Activated CD4-positive, alpha-beta T cell treated with anti-CD3 and anti-CD28 coated beads, Interleukin-2, amount 10 ng/mL, durations not matched to agents 24 days and 14 days (primary cell): ENCODE measurements at regions of chr13 and their contacts with region 1.

Region 1: GRCh38 chr13:60431108-60431700 is 34.2 kb downstream of the TDRD3 start:
- DNase-seq: peak; percentile 70
- H3K4me3 Mint-ChIP-seq: no peak overlapping the region
- H3K27ac Mint-ChIP-seq: no peak overlapping the region
- H3K4me1 Mint-ChIP-seq: peaks cover 13% of the 10 kb centered on the region
- H3K27me3 Mint-ChIP-seq: no peaks in the 10 kb centered on the region

Region 2: DNA sequence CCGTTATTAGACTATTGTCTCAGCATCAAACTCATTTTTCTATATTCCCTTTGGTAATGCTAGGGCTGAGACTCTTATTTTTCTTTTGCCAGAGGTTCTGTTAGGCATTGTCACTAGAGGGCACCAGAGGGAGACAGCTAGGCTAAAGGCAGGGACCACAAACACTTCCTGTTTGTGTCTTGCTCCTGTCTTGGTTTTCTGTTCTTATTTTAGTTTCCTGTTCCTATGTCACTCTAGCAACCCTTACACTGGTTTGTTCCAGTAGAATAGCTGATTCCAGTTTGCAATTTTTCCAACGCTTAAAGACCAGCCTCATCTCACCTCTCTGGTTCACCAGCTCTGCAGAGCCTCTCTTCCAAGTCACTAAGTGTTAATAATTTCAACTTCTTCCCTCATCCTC is 1039.5 kb before region 1 on chr13:
- intact Hi-C with region 1: loop called (anchors 5 kb)
- DNase-seq: peak; percentile 91
- H3K4me3 Mint-ChIP-seq: no peak overlapping the region
- H3K27ac Mint-ChIP-seq: no peak overlapping the region
- H3K4me1 Mint-ChIP-seq: peaks cover 2% of the 10 kb centered on the region
- H3K27me3 Mint-ChIP-seq: peaks cover 20% of the 10 kb centered on the region

Region 3: DNA sequence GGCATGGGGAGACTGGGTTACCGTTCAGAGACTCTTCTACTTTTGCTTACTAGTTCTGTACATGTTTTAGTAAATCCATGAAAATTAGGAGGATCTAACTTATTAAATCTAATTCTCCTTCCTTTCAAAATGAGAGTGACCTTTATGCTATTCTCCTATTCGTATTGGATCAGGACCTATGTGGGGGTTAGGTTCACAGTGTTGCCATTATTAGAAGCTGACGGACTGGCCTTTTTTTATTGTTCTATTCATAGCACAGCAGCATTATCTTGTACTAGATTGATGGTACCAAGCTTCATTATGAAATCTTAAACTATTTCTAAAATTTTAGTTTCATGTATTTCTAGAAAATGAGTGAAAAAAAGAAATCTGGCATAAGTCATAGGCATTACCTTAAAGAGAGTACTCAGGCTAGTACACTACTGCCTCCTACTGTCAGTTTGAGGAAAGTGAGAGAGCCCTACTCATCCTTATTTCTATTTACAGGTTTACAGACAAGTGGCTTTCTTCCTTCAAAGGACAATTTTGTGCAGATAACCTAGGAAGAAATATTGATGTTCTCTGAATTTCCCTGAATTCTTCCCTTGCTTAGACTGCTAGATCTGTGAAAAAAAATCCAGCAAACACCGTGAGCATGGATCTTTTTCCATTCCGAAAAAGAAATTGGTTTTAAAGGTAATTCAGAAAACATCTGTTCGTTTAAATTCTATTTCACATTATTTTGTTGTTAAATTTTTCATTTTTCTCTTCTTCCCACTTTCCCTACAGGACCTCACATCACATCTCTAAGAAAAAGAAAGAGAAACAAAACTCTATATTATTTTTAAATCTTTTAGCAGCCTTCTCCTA is 753.0 kb before region 1 on chr13:
- intact Hi-C with region 1: loop called (anchors 2 kb)
- DNase-seq: peak; percentile 65
- H3K4me3 Mint-ChIP-seq: no peak overlapping the region
- H3K27ac Mint-ChIP-seq: no peak overlapping the region
- H3K4me1 Mint-ChIP-seq: no peaks in the 10 kb centered on the region
- H3K27me3 Mint-ChIP-seq: no peaks in the 10 kb centered on the region

Region 4: GRCh38 chr13:60134376-60134775 is 296.8 kb before region 1 on chr13:
- intact Hi-C with region 1: no loop called
- DNase-seq: peak; percentile 59
- H3K4me3 Mint-ChIP-seq: no peak overlapping the region
- H3K27ac Mint-ChIP-seq: no peak overlapping the region
- H3K4me1 Mint-ChIP-seq: peaks cover 13% of the 10 kb centered on the region
- H3K27me3 Mint-ChIP-seq: no peaks in the 10 kb centered on the region

Region 5: DNA sequence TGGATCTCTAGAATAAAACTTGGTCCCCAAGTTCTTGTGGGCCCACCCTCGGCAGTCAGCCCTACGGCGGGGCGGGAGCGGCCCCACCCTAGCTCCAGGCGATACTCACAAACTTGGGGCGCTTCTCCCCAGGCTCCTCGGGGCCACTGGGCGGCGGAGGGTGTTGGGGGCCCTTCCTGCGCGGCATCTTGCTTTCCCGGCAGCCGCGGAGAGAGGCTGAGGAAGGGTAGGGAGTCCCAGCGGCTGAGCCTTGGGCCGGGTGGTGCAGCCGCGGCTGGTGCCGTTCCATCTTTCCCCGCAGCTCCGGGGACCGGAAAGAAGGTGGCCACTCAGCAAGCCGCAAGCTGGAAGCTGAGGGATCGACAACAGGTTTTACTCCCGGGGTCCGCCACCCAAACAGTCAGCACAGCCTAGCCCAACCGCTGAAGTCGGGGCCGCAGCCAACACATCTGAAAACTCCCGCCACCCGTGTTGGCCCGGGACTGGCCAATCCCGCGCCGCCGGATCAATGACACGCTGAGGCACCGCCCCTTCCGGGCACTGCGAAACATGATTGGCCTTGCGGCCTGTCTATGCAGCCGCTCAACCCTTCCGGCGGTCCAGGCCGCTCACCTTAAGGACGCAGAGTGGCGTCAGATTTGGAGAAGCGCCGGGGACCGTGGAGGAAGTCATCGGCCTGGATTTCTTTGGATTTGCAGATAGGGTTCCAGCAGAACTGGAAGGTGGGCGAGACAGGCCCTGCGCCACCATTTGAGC is 267.5 kb before region 1 on chr13 and contains the start of gene DIAPH3:
- intact Hi-C with region 1: loop called (anchors 10 kb)
- DNase-seq: peak; percentile 99
- H3K4me3 Mint-ChIP-seq: peak within 1 kb of the TSS; percentile 92
- H3K27ac Mint-ChIP-seq: peak within 1 kb of the TSS; percentile 90
- H3K4me1 Mint-ChIP-seq: peaks cover 31% of the 10 kb centered on the region
- H3K27me3 Mint-ChIP-seq: no peaks in the 10 kb centered on the region
- total RNA-seq, gene DIAPH3: 26.3 and 26.6 TPM in 2 replicates

Region 6: GRCh38 chr13:60242043-60242595 is 189.1 kb before region 1 on chr13:
- intact Hi-C with region 1: no loop called
- DNase-seq: no peak
- H3K4me3 Mint-ChIP-seq: no peak overlapping the region
- H3K27ac Mint-ChIP-seq: no peak overlapping the region
- H3K4me1 Mint-ChIP-seq: no peaks in the 10 kb centered on the region
- H3K27me3 Mint-ChIP-seq: peaks cover 9% of the 10 kb centered on the region

Region 7: GRCh38 chr13:60335531-60335930 is 95.7 kb before region 1 on chr13:
- intact Hi-C with region 1: loop called (anchors 1 kb)
- DNase-seq: no peak
- H3K4me3 Mint-ChIP-seq: no peak overlapping the region
- H3K27ac Mint-ChIP-seq: no peak overlapping the region
- H3K4me1 Mint-ChIP-seq: no peaks in the 10 kb centered on the region
- H3K27me3 Mint-ChIP-seq: peaks cover 16% of the 10 kb centered on the region

Region 8: GRCh38 chr13:60396783-60397703 is 34.2 kb before region 1 on chr13 and contains the start of gene TDRD3:
- intact Hi-C with region 1: loop called (anchors 1 kb)
- DNase-seq: peak; percentile 93
- H3K4me3 Mint-ChIP-seq: peak within 1 kb of the TSS; percentile 97
- H3K27ac Mint-ChIP-seq: peak within 1 kb of the TSS; percentile 98
- H3K4me1 Mint-ChIP-seq: peaks cover 36% of the 10 kb centered on the region
- H3K27me3 Mint-ChIP-seq: no peaks in the 10 kb centered on the region
- total RNA-seq, gene TDRD3: 19.4 and 19.7 TPM in 2 replicates

Region 9: GRCh38 chr13:60448907-60449510 is 17.8 kb after region 1 on chr13:
- intact Hi-C with region 1: no loop called
- DNase-seq: peak; percentile 74
- H3K4me3 Mint-ChIP-seq: no peak overlapping the region
- H3K27ac Mint-ChIP-seq: no peak overlapping the region
- H3K4me1 Mint-ChIP-seq: no peaks in the 10 kb centered on the region
- H3K27me3 Mint-ChIP-seq: no peaks in the 10 kb centered on the region

Region 10: DNA sequence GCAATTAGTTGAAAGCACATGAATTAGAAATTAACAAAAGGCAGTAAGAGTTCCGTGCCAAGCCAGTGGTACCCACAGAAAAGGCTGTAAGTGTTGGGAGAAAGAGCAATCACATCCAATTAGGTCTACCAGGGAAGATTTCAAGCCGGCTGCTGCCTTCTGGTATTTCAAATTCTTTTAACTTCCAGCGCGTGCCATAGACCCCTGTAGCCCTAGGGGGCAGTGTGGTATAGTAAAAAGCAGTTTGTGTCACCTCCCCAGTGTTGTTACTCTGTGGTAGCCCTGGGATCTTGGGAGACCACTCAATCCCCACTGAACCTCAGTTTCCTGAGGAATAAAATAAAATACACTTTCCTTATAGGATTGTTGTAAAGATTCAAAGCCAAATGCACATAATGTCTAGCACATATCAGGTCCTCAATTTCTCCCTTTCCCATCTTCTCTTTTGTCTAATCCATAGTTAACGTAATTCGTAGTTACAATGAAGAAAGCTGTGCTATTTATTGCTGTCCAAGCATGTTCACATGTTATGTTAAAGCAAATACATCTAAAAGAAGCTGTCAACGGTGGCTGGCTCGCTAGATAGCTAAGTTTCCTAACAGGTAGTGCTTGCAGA is 196.0 kb after region 1 on chr13:
- intact Hi-C with region 1: no loop called
- DNase-seq: peak; percentile 63
- H3K4me3 Mint-ChIP-seq: no peak overlapping the region
- H3K27ac Mint-ChIP-seq: no peak overlapping the region
- H3K4me1 Mint-ChIP-seq: no peaks in the 10 kb centered on the region
- H3K27me3 Mint-ChIP-seq: peaks cover 2% of the 10 kb centered on the region